ENCODE measurements at regions of chr2 and their contacts with region 1.

Region 1: DNA sequence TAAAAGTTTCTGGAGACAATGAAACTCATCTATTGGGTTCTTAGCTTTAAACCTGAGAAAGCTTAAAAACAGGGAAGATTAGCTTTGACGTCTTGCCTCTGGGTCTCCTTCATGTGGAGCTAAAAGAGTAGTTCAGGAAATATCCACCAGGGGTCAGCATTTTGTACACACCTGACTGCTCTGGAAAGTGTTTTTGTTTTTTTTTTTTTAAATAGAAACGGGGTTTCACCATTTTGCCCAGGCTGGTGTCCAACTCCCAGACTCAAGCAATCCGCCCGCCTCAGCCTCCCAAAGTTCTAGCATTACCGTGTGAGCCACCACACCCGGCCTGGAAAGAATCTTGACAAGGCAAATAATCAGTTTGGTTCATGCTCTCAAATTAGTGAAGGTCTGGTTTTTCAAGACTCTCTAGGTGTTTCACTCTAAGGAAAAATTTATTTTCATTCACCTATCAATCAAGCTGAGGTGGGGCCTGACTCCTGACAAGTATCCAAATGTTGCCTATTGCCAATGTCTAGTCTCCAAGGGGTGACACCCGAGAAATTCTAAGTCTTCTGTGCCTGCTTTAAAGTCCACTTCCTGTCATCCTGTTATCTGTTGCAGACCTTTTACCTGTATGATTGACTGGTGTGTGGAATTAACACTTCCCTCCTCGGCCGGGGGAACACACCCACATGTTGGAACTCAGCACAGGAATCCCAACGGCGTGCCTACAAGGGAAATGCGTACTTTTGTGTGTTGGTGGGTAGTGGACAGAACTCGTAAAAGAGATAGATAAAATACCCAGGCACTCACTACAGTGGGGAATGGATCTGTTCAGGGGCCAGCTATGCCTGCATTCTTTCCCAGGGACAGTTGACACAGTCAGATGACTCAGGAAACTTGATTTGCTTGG is 11.3 kb downstream of the IL1RN start:
- DNase-seq: peak in 7 of 9 experiments; percentile 31 to 90 (median 64)
- ATAC-seq: peak; percentile 79
- H3K4me3 ChIP-seq: peak overlapping the region in 1 of 2 experiments; percentile 10
- H3K4me3 Mint-ChIP-seq: peak overlapping the region; percentile 62
- H3K27ac ChIP-seq: no peak overlapping the region
- H3K27ac Mint-ChIP-seq: peak overlapping the region; percentile 86
- H3K4me1 ChIP-seq: peaks cover 9% of the 10 kb centered on the region
- H3K4me1 Mint-ChIP-seq: peaks cover 22% of the 10 kb centered on the region
- H3K27me3 ChIP-seq: no peaks in the 10 kb centered on the region
- H3K27me3 Mint-ChIP-seq: no peaks in the 10 kb centered on the region
- CTCF ChIP-seq: peak; percentile 74

Region 2: GRCh38 chr2:113127646-113128570 is 10.8 kb before region 1 on chr2:
- CTCF ChIA-PET with region 1: interaction called, 17 read pairs
- POLR2A ChIA-PET with region 1: no interaction called
- intact Hi-C with region 1: no loop called
- DNase-seq: no peak
- ATAC-seq: no peak
- H3K4me3 ChIP-seq: no peak overlapping the region
- H3K4me3 Mint-ChIP-seq: no peak overlapping the region
- H3K27ac ChIP-seq: no peak overlapping the region
- H3K27ac Mint-ChIP-seq: no peak overlapping the region
- H3K4me1 ChIP-seq: no peaks in the 10 kb centered on the region
- H3K4me1 Mint-ChIP-seq: peaks cover 5% of the 10 kb centered on the region
- H3K27me3 ChIP-seq: no peaks in the 10 kb centered on the region
- H3K27me3 Mint-ChIP-seq: peaks cover 9% of the 10 kb centered on the region
- CTCF ChIP-seq: no peak

Region 3: DNA sequence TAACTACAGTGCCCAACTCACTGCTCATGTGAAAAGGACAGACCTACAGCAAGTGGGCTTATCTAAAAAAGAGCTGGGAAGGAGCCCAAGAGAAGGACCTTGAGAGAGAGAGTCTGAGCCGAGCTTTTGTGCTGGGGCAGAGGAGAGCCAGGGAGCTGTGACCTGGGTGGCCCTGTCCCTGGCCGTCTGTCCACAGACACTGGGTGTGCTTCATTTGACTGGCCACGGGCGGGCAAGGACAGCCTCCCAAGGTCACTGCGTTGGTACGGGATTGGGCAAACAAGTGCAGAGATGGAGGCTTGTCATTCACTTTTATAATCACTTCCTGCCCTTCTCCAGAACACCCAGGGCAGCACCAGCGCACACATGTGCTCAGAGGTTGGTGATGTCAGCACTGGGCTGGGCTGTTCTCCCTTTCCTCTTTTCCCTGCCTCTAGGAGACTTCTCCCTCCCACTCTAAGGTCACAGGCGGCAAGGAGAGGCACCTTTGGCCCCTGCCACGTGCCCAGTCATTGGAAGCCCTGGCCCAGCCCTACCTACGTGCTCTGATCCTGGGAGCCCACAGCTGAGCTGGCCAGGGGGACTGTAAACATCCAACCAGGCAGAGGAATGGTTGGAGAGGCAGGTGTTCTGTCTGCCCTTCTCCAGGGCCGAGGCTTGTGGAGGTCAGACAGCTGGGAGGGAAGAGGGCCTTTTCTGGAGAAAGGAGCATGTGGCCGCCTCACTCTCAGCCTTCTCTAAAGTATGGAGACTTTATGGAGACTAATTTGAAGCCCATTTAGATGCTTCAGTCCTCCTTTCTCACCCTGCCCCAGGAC is 28.6 kb after region 1 on chr2:
- CTCF ChIA-PET with region 1: interaction called, 127 read pairs
- POLR2A ChIA-PET with region 1: no interaction called
- intact Hi-C with region 1: no loop called
- DNase-seq: peak in 6 of 9 experiments; percentile 31 to 66 (median 43)
- ATAC-seq: peak; percentile 68
- H3K4me3 ChIP-seq: peak overlapping the region in 1 of 2 experiments; percentile 24
- H3K4me3 Mint-ChIP-seq: peak overlapping the region; percentile 81
- H3K27ac ChIP-seq: peak overlapping the region; percentile 57 to 75
- H3K27ac Mint-ChIP-seq: peak overlapping the region; percentile 98
- H3K4me1 ChIP-seq: peaks cover 63% of the 10 kb centered on the region
- H3K4me1 Mint-ChIP-seq: peaks cover 75% of the 10 kb centered on the region
- H3K27me3 ChIP-seq: no peaks in the 10 kb centered on the region
- H3K27me3 Mint-ChIP-seq: no peaks in the 10 kb centered on the region
- CTCF ChIP-seq: no peak

Region 4: DNA sequence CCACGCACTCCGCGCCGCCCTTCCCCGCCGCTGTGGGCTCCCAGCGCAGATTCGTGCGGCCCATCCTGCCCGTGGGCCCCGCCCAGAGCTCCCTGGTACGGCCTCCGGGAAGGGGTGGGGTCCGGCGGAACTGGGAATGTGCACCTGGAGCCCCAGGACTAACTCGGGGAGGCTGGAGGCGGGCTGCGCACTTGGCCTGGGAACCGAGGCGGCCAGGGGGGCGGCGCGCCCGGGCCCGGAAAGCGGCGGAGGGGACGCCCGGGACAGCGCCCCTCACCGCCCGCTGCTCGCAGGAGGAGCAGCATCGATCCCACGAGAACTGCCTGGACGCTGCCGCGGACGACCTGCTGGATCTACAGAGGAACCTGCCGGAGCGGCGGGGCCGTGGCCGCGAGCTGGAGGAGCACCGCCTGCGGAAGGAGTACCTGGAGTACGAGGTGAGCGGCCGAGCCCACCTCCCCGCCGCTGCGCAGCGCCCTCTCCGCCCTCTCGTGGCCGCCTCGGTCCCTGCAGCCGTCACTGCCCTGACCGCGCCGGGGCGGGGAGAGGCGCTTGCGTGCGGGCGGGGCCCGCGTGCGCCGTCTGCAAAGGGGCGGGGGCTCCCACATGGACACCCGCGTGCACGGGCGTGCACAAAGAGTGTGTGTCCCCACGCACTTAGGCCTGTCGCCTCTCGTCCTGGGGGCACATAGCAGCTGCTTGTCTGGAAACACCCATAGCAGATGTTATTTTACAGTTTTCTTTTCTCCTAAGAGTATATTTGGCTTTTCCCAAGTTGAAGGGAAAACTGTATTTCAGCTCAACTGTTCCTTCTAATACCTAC is 60.3 kb after region 1 on chr2:
- CTCF ChIA-PET with region 1: interaction called, 368 read pairs
- POLR2A ChIA-PET with region 1: interaction called, 10 read pairs
- intact Hi-C with region 1: loop called (anchors 1 kb)
- DNase-seq: peak; percentile 48 to 84 (median 73)
- ATAC-seq: peak; percentile 77
- H3K4me3 ChIP-seq: no peak overlapping the region
- H3K4me3 Mint-ChIP-seq: no peak overlapping the region
- H3K27ac ChIP-seq: no peak overlapping the region
- H3K27ac Mint-ChIP-seq: no peak overlapping the region
- H3K4me1 ChIP-seq: peaks cover 7% of the 10 kb centered on the region
- H3K4me1 Mint-ChIP-seq: peaks cover 24% of the 10 kb centered on the region
- H3K27me3 ChIP-seq: no peaks in the 10 kb centered on the region
- H3K27me3 Mint-ChIP-seq: no peaks in the 10 kb centered on the region
- CTCF ChIP-seq: peak; percentile 76

Region 5: GRCh38 chr2:113219889-113220641 is 81.4 kb after region 1 on chr2:
- CTCF ChIA-PET with region 1: interaction called, 18 read pairs
- POLR2A ChIA-PET with region 1: no interaction called
- intact Hi-C with region 1: no loop called
- DNase-seq: no peak
- ATAC-seq: no peak
- H3K4me3 ChIP-seq: no peak overlapping the region
- H3K4me3 Mint-ChIP-seq: no peak overlapping the region
- H3K27ac ChIP-seq: no peak overlapping the region
- H3K27ac Mint-ChIP-seq: no peak overlapping the region
- H3K4me1 ChIP-seq: peaks cover 17% of the 10 kb centered on the region
- H3K4me1 Mint-ChIP-seq: peaks cover 19% of the 10 kb centered on the region
- H3K27me3 ChIP-seq: no peaks in the 10 kb centered on the region
- H3K27me3 Mint-ChIP-seq: peaks cover 2% of the 10 kb centered on the region
- CTCF ChIP-seq: no peak

Region 6: DNA sequence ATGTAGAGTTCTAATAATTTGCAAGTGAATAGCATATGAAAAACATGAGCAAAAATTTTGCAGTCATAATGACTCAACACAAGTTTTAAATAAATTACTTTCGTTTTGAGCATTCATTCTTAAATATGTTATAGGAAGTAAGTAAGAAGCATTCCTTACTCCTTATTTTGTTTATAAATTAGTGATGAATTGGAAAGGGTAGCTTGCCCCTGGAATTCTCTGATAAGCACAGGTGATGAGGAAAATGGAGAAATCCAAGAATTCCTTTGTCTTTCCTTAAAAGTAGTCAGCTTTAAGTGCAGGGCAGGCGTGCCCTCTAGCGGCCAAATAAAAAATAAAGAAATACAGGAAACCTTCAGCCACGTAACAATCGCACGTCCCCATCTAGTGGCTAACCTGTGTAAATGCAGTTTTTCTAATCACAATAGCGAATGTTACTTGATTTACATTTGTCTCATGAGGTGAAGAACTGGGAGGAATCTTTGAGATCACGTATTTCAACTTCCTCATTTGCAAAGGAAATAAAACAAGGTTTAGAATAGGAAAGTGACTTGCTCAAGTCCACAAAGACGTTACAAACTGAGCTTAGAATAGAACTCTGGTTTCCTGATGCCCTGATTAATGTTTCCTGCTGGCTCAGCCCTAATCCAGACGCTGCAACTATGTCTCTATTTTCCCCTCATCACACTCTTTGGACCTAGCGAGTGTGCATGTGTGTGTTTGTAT is 251.6 kb after region 1 on chr2:
- CTCF ChIA-PET with region 1: interaction called, 30 read pairs
- POLR2A ChIA-PET with region 1: interaction called, 9 read pairs
- intact Hi-C with region 1: loop called in 1 of 2 experiments (anchors 5 kb)
- DNase-seq: peak; percentile 23 to 88 (median 59)
- ATAC-seq: peak; percentile 99
- H3K4me3 ChIP-seq: peak overlapping the region; percentile 39 to 47
- H3K4me3 Mint-ChIP-seq: peak overlapping the region; percentile 78
- H3K27ac ChIP-seq: no peak overlapping the region
- H3K27ac Mint-ChIP-seq: peak overlapping the region; percentile 63
- H3K4me1 ChIP-seq: no peaks in the 10 kb centered on the region
- H3K4me1 Mint-ChIP-seq: peaks cover 13% of the 10 kb centered on the region
- H3K27me3 ChIP-seq: no peaks in the 10 kb centered on the region
- H3K27me3 Mint-ChIP-seq: peaks cover 5% of the 10 kb centered on the region
- CTCF ChIP-seq: peak; percentile 86